Endothelial cell of umbilical vein (primary cell): ENCODE measurements at regions of chr1 and their contacts with region 1.

Region 1: GRCh38 chr1:4668864-4669700 is 14.7 kb downstream of the AJAP1 start:
- DNase-seq: no peak
- H3K4me3 ChIP-seq: no peak overlapping the region
- H3K27ac ChIP-seq: no peak overlapping the region
- H3K4me1 ChIP-seq: no peaks in the 10 kb centered on the region
- H3K27me3 ChIP-seq: no peaks in the 10 kb centered on the region
- CTCF ChIP-seq: no peak
- POLR2A ChIP-seq: no peak

Region 2: GRCh38 chr1:4621646-4622045 is 47.4 kb before region 1 on chr1:
- CTCF ChIA-PET with region 1: no interaction called
- POLR2A ChIA-PET with region 1: no interaction called
- dilution Hi-C with region 1: no loop called
- intact Hi-C with region 1: loop called (anchors 2 kb)
- DNase-seq: no peak
- H3K4me3 ChIP-seq: no peak overlapping the region
- H3K27ac ChIP-seq: no peak overlapping the region
- H3K4me1 ChIP-seq: no peaks in the 10 kb centered on the region
- H3K27me3 ChIP-seq: no peaks in the 10 kb centered on the region
- CTCF ChIP-seq: no peak
- POLR2A ChIP-seq: no peak

Region 3: GRCh38 chr1:4690951-4691675 is 22.0 kb after region 1 on chr1:
- CTCF ChIA-PET with region 1: no interaction called
- POLR2A ChIA-PET with region 1: no interaction called
- dilution Hi-C with region 1: no loop called
- intact Hi-C with region 1: loop called (anchors 1 kb)
- DNase-seq: no peak
- H3K4me3 ChIP-seq: no peak overlapping the region
- H3K27ac ChIP-seq: no peak overlapping the region
- H3K4me1 ChIP-seq: no peaks in the 10 kb centered on the region
- H3K27me3 ChIP-seq: no peaks in the 10 kb centered on the region
- CTCF ChIP-seq: no peak
- POLR2A ChIP-seq: no peak

Region 4: GRCh38 chr1:4736254-4736653 is 67.2 kb after region 1 on chr1:
- CTCF ChIA-PET with region 1: no interaction called
- POLR2A ChIA-PET with region 1: no interaction called
- dilution Hi-C with region 1: no loop called
- intact Hi-C with region 1: no loop called
- DNase-seq: no peak
- H3K4me3 ChIP-seq: no peak overlapping the region
- H3K27ac ChIP-seq: no peak overlapping the region
- H3K4me1 ChIP-seq: no peaks in the 10 kb centered on the region
- H3K27me3 ChIP-seq: no peaks in the 10 kb centered on the region
- CTCF ChIP-seq: no peak
- POLR2A ChIP-seq: no peak